Right cardiac atrium (tissue), 5 donors: ENCODE measurements at regions of chr21 and their contacts with region 1.

Region 1: DNA sequence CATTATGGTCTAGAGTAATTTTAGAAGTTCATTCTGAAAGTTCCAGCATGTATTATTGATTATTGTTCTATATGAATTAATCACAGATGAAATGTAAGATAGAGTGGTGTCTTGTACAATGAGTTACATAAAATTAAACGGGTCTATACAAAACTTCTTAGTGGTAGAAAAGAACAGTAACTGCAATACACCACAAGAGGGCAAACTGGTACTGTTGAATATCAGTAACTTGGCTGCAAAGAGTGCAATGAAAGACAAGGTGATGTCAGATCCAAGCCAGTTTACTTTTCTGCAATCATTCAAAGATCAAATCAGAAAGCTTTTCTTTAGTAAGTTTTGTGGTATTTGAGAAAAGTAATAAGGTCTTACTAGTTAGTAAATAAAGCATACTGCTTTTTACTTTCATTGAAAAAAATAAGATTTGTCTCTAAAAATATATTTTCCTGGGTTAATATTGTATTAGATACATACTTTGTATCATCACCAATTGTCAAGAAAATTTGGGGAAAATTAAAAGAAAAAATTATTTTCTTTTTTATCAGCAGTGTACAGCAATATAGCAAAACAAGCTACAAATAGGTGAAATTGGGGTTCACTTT is 66.4 kb upstream of the BTG3 start:
- DNase-seq: no peak
- ATAC-seq: peak; percentile 76 to 84
- H3K4me3 ChIP-seq: no peak overlapping the region
- H3K27ac ChIP-seq: no peak overlapping the region
- H3K4me1 ChIP-seq: no peaks in the 10 kb centered on the region
- H3K27me3 ChIP-seq: no peaks in the 10 kb centered on the region

Region 2: DNA sequence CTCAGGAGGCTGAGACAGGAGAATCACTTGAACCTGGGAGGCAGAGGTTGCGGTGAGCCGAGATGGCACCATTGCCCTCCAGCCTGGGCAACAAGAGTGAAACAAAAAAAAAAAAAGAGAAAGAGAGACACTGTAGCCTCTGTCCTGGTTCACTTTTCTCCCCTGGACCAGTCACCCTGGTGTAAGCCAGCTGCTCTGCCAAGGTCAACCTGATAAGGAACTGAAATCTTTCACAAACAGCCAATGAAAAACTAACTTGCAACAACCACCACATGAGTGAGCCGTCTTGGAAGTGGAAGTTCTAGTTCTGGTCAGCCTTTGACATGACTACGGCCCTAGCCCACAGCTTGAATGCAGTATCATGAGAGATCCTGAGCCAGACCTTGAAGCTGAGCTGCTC is 203.1 kb before region 1 on chr21:
- intact Hi-C with region 1: no loop called
- DNase-seq: no peak
- ATAC-seq: peak; percentile 21 to 60
- H3K4me3 ChIP-seq: no peak overlapping the region
- H3K27ac ChIP-seq: no peak overlapping the region
- H3K4me1 ChIP-seq: no peaks in the 10 kb centered on the region
- H3K27me3 ChIP-seq: no peaks in the 10 kb centered on the region

Region 3: GRCh38 chr21:17903029-17903806 is 224.1 kb after region 1 on chr21:
- intact Hi-C with region 1: loop called (anchors 2 to 10 kb)
- DNase-seq: no peak
- ATAC-seq: no peak
- H3K4me3 ChIP-seq: no peak overlapping the region
- H3K27ac ChIP-seq: no peak overlapping the region
- H3K4me1 ChIP-seq: peaks cover 3% of the 10 kb centered on the region
- H3K27me3 ChIP-seq: no peaks in the 10 kb centered on the region

Region 4: GRCh38 chr21:17925000-17925610 is 246.0 kb after region 1 on chr21:
- intact Hi-C with region 1: loop called in 3 of 4 experiments (anchors 5 to 10 kb)
- DNase-seq: peak in 1 of 3 donors; percentile 21
- ATAC-seq: peak; percentile 86 to 92
- H3K4me3 ChIP-seq: no peak overlapping the region
- H3K27ac ChIP-seq: no peak overlapping the region
- H3K4me1 ChIP-seq: no peaks in the 10 kb centered on the region
- H3K27me3 ChIP-seq: no peaks in the 10 kb centered on the region

Region 5: GRCh38 chr21:18129526-18129925 is 450.4 kb after region 1 on chr21:
- intact Hi-C with region 1: no loop called
- DNase-seq: no peak
- ATAC-seq: no peak
- H3K4me3 ChIP-seq: no peak overlapping the region
- H3K27ac ChIP-seq: no peak overlapping the region
- H3K4me1 ChIP-seq: no peaks in the 10 kb centered on the region
- H3K27me3 ChIP-seq: no peaks in the 10 kb centered on the region